Common myeloid progenitor, CD34-positive (primary cell): ENCODE measurements at regions of chr17 and their contacts with region 1.

Region 1: DNA sequence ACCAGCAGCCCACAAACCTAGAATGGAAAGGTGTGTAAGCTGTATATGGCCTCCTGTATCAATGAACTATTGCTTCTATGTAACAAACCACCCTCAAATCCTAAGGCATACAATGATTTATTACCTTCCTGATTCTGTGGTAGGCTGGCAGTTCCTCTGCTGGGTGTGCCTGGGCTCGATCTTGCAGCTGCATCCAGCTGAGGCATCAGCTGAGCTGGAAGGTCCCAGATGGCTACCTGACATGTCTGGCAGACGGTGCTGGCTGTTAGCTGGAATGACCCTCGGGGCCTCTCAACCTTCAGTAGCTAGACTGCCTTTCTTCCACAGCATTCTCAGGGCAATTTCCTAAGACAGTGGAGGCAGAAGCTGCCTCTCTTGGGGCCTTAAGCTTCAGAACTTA is 152.7 kb downstream of the RAB11FIP4 start:
- DNase-seq: peak; percentile 65 to 94 (median 92)
- H3K4me3 ChIP-seq: no peak overlapping the region
- H3K27ac ChIP-seq: no peak overlapping the region
- H3K4me1 ChIP-seq: peaks cover 0 to 22% (median 10%) of the 10 kb centered on the region in 4 experiments
- H3K27me3 ChIP-seq: no peaks in the 10 kb centered on the region

Region 2: DNA sequence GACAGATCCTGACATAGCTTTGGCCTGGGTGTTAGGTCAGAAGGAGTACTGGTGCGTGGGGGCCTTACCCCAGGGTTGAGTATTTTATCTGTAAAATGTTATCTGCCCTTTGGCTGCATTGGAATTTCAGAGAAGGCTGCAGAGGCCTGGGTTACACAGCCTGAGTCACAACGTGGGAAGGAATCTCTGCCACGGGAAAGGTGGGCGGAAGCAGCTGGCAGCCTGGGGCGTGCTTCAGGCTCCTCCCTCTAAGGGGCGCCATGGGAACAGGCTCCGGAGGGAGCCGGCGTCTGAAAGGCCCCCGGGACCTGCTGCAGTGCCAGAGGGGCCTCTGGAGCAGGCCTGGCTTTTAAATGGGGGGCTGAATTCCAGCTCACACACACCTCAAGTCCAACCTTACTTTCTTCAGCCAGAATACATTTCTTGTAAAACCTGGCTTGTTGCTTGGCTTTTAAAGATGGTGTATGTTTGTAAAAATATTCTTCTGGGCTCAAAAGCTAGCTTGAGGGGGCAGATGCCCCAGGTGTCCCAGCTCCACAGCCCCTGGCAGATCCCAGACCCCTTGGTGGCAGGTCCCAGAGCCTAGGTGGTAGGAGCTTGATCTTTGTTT is 10.5 kb before region 1 on chr17:
- CTCF ChIA-PET with region 1: interaction called, 11 read pairs
- POLR2A ChIA-PET with region 1: interaction called, 4 read pairs
- DNase-seq: peak in 2 of 3 donors; percentile 47 to 61
- H3K4me3 ChIP-seq: no peak overlapping the region
- H3K27ac ChIP-seq: no peak overlapping the region
- H3K4me1 ChIP-seq: peaks cover 9 to 49% (median 45%) of the 10 kb centered on the region in 4 experiments
- H3K27me3 ChIP-seq: no peaks in the 10 kb centered on the region

Region 3: DNA sequence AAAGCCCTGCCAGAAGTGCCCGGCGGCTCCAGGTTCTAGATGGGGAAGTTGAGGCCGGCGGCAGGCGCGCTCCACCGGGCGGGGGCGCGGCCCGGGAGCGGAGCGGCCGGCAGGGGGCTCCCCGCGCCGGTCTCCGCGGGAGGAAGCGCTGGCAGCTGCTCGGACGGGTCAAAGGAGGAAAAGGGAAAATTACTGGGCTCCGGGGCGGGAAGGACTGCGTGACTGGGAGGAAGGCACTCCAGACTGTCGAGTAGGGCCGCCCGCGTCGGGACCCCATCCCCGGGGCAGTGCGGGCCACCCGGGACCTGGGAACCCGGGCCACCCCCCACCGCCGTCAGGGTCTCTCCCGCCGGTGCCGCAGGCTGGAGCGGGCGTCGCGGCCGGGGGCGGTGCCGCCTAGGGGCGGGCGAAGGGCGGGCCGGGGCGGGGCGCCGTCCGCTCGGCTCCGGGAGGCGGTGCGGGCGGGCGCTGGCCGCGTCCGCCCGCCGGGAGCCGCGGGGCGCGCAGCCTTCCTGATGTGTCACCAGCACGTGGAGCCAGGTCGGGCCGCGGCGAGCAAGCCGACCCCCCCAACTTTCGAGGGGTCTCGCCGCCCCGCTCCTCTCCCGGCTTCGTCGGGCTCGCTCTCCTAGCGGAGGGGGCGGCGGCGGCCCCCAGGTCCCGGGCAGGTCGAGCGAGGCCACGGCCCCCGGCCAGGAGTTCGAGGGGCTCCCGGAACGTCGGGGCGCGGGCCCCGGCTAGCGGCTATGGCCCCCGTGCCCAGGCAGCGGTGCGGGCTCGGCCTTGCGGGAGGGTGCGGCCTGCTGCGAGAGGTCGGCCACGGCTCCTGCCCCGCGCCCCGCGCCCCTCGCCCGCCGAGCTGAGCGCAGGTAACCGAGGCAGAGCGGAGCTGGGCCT is 14.8 kb after region 1 on chr17:
- CTCF ChIA-PET with region 1: interaction called, 14 read pairs
- POLR2A ChIA-PET with region 1: no interaction called
- DNase-seq: peak; percentile 47 to 68 (median 63)
- H3K4me3 ChIP-seq: peak overlapping the region; percentile 9 to 76 (median 53)
- H3K27ac ChIP-seq: no peak overlapping the region
- H3K4me1 ChIP-seq: peaks cover 3 to 36% (median 29%) of the 10 kb centered on the region in 4 experiments
- H3K27me3 ChIP-seq: peaks cover 2 to 19% (median 5%) of the 10 kb centered on the region in 5 experiments